Right ventricle myocardium inferior (tissue), 1 donor: ENCODE measurements at regions of chr4 and their contacts with region 1.

Region 1: GRCh38 chr4:77385124-77385969 is 220.3 kb upstream of the CXCL13 start:
- DNase-seq: no peak
- ATAC-seq: peak; percentile 70

Region 2: GRCh38 chr4:77007358-77008191 is 377.8 kb before region 1 on chr4:
- intact Hi-C with region 1: no loop called
- DNase-seq: no peak
- ATAC-seq: peak; percentile 74

Region 3: GRCh38 chr4:77065382-77065781 is 320.0 kb before region 1 on chr4:
- intact Hi-C with region 1: no loop called
- DNase-seq: no peak
- ATAC-seq: no peak

Region 4: GRCh38 chr4:77433418-77433733 is 48.0 kb after region 1 on chr4:
- intact Hi-C with region 1: loop called (anchors 1 kb)
- DNase-seq: no peak
- ATAC-seq: peak; percentile 78

Region 5: GRCh38 chr4:77600521-77601451 is 215.4 kb after region 1 on chr4:
- intact Hi-C with region 1: loop called (anchors 5 kb)
- DNase-seq: no peak
- ATAC-seq: no peak

Region 6: DNA sequence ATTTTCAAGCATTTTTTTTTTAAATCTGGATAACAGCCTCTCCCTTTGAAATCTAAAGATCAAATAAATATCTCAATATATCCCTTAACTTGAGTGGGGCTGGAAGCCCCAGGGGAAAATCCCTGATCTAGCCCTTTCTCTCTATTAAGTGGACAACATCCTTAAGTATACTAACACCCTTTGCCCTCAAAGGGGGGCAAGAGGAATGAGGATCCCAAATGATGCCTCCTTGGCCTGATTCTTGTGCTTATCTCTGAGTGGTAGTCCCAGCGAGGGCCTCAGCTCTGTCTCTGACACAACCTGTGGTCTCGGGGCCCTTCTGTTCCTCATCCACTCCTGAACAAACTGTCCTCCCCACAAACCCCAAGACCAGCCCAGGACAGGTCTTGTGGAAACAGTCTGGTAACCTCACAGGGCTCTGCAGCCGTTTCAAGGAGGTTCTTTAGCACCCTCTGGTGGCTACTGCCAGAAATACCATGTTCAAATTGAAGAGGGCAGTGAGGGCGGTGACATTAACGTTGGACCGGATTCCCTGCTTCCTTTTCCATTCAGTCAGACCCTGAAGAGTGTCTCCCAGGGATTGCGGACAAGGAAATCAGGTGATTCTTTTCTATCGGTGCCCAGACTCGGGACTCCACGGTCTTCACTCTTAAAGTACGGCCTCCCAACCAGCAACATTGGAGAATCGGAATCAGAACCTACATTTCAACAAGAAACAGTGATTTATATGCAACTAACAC is 233.2 kb after region 1 on chr4:
- intact Hi-C with region 1: loop called (anchors 5 kb)
- DNase-seq: no peak
- ATAC-seq: peak; percentile 89

Region 7: GRCh38 chr4:77697860-77698590 is 312.7 kb after region 1 on chr4:
- intact Hi-C with region 1: no loop called
- DNase-seq: no peak
- ATAC-seq: peak; percentile 83

Region 8: DNA sequence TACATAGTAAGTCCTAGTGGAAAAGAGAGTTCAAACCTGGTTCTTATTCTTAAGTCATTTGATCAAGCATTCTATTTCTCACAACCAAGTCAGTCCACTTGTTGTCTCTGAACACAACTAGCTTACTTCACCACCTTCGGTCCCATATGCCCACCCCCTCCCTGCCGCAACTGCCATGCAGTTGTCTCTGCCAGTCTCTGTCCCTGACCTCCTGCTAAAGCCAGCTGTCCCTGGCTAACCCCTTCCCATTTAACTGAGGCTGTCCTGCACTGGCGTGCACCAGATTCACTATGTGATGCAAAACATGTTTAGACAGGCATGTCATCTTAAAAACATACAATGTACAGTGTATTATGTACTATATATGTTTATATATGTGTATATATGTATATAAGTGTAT is 684.5 kb after region 1 on chr4:
- intact Hi-C with region 1: no loop called
- DNase-seq: no peak
- ATAC-seq: no peak